Activated CD4-positive, alpha-beta memory T cell treated with anti-CD3 and anti-CD28 coated beads, Interleukin-2, amount 10 ng/mL, durations not matched to agents 7 days and 5 days (primary cell): ENCODE measurements at regions of chr9 and their contacts with region 1.

Region 1: DNA sequence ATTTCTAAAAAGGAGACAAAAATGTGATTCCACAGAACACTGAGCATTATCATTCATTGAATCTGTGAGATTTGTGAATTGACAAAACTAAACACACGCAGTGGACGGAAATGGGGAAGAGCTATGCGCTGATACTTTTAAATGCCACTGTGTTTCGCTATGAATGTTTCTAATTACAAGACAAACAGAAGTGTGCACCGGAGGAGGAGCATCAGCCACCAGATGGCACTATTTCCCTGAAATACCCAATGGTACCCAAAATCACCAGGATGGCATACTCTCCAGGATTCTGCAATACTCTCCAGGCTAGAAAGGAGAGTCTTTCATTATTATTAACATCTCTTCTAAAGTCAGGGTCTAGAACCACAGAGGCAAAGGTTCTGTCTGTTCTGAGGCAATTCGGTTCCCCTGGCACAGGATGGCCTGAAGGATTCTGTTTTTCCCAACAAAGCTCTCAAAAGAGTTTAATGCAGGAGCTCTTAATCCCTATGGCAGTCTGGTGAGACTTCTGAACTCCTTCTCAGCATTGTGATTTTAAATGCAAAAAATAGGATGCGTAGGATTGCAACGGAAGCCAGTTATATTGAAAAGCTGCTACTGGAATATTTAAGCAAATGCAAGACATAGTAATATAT is 13.8 kb upstream of the PUM3 start:
- DNase-seq: peak; percentile 73
- H3K4me3 Mint-ChIP-seq: no peak overlapping the region
- H3K27ac Mint-ChIP-seq: no peak overlapping the region
- H3K4me1 Mint-ChIP-seq: peaks cover 10% of the 10 kb centered on the region
- H3K27me3 Mint-ChIP-seq: peaks cover 36% of the 10 kb centered on the region

Region 2: DNA sequence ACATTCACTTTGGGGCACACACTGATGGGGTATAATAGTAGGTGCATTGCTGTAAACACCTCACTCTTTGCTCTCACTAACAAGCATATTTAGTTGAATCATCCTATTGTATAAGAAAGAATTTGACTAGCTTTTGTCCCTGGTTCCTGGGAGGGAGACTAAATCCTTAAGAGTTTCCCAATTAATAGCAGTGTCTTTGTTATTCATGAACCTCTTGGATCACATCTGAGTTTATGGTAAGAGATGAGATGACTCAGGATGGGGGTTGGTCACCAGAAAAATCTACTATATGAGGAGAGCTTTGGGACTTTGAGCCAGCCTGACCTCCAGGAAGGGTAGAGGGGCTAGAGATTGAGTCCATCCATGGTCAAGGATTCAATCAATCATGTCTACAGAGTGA is 70.6 kb before region 1 on chr9:
- CTCF ChIA-PET with region 1: no interaction called
- POLR2A ChIA-PET with region 1: no interaction called
- DNase-seq: no peak
- H3K4me3 Mint-ChIP-seq: no peak overlapping the region
- H3K27ac Mint-ChIP-seq: no peak overlapping the region
- H3K4me1 Mint-ChIP-seq: peaks cover 15% of the 10 kb centered on the region
- H3K27me3 Mint-ChIP-seq: no peaks in the 10 kb centered on the region

Region 3: DNA sequence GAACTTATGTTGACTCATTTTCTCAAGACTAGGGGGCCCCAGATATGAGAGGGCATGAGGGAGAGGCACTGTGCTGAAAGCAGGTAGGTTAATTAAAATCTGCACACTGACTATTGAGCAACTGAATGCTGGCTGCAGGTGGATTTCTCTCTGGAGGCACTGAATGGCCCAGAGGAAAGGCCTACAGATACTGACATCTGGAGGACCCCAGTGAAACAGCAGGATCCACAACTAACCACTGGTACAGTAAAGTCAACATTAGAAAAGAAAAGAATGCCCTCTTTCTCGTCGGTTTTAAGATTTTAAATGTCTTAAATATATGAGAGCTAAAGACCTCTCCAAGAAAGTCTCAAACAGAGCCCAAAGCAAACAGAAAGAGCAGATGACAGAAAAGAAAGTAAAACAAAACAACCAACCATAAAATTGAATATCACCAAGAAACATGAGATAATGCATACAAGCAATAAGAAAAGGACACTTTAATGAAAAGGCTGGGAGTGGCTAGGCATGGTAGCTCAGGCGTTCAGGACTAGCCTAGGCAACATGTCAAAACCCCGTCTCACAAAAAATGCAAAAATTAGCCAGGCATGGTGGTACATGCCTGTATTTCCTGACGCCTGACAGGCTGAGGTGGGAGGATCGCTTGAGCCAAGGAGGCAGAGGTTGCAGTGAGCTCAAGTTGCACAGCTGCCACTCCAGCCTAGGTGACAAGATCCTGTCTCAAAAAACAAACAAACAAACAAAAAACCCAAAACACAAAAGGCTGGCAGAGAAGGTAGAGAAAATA is 57.1 kb before region 1 on chr9:
- CTCF ChIA-PET with region 1: no interaction called
- POLR2A ChIA-PET with region 1: no interaction called
- DNase-seq: no peak
- H3K4me3 Mint-ChIP-seq: no peak overlapping the region
- H3K27ac Mint-ChIP-seq: no peak overlapping the region
- H3K4me1 Mint-ChIP-seq: peaks cover 4% of the 10 kb centered on the region
- H3K27me3 Mint-ChIP-seq: no peaks in the 10 kb centered on the region

Region 4: DNA sequence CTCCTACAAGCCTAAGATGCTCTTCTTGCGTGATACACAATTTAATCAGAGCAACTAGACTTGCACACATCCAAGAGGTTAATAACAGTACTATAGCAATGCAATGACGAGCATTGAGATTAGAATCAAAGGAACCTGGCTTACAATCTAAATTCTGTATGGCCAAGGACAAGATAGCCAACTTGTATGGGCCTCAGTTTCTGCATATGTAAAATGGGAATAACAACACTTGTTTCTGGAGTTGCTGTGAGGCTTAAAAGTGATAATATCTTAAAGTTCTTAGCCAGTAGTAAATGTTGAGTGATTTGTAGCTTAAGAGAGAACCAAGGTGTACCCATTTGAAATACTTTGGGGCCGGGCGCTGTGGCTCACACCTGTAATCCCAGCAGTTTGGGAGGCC is 11.6 kb before region 1 on chr9:
- CTCF ChIA-PET with region 1: interaction called, 36 read pairs
- POLR2A ChIA-PET with region 1: interaction called, 6 read pairs
- DNase-seq: no peak
- H3K4me3 Mint-ChIP-seq: no peak overlapping the region
- H3K27ac Mint-ChIP-seq: no peak overlapping the region
- H3K4me1 Mint-ChIP-seq: peaks cover 18% of the 10 kb centered on the region
- H3K27me3 Mint-ChIP-seq: no peaks in the 10 kb centered on the region

Region 5: DNA sequence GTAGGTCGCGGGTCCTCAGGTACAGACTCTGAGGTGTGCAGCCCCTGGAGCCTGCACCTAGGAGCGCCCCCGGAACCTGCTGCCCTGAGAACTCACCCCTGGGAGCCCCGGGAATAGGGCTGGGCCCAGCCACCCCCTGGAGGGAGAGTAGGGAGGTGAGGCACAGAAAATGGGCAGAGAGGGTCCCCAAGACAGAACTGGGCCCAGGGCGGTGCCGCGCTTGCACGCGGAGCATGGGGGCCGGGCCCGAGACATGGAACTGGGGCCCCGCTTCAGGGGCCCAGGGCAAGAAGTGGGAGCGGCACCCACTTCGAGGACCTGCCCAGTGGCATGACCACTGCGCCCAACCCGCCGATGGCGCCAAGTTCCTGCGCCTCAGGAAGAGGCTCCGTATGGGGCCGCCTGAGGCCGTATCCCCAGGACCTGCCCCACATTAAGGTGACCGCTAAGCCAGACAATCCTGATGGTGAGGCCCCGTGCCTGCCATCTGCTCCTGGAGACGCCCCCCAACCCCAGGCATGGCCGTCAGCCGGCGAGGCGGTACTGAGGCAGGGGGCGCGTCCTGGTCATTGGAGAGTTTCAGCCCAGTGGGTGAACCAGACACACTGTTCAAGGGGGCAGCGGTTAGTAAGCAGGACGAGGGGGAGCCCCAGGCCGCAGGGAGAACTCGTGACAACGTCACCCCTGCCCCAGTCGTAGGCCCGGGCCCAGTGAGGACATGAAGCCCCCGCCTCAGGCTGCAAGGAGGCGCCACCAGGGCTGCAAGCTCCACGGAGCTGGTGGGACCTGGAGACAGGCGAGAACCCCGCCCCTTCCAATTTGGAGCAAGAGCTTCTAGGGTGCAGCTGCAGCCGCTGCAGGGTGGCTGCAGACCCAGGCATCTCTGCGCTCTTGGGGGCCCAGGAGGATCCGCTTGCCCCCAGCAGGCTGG is 75.7 kb after region 1 on chr9:
- CTCF ChIA-PET with region 1: no interaction called
- POLR2A ChIA-PET with region 1: no interaction called
- DNase-seq: no peak
- H3K4me3 Mint-ChIP-seq: no peak overlapping the region
- H3K27ac Mint-ChIP-seq: no peak overlapping the region
- H3K4me1 Mint-ChIP-seq: no peaks in the 10 kb centered on the region
- H3K27me3 Mint-ChIP-seq: no peaks in the 10 kb centered on the region

Region 6: DNA sequence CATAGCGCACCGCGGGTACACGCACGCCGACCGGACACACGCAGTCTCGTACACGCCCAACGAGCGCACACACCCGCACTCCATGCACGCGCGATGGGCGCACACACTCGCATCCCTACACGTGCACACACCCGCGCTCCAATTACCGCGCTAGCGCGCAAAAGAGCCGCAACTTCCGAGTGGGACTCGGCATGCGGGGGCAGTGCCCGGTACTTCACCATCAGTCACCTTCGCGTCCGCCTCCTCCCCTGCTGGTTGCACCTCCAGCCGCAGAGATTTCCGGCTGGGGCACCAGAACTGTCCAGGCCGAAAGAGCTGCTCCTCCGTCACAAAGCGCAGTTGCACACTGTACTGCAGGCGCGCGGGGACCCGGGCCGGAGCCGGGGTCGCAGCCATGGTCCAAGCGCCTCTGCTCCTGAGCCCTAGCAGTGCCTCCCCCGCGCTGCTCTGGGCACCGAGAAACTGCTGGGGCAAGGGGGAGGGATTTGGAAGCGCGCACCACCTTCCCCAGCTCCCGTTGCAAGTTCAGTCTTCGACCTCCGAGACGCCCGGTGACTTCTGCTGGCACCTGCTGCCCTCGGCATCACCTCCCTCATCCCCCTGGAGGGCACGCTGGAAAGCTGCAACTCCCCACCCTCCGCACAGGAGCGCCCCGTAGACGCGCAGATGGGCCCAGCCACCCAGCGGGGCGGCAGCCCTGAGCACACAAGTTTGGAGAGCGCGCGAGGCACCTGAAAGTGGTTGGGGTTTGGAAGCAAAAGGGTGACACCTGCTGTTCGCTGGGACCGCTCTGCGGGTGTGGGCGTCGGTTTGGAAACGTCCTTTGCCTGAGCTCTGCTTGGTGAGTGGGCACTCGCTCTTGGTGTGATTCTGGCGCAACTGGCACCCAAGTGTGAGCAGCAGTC is 323.6 kb after region 1 on chr9:
- CTCF ChIA-PET with region 1: interaction called, 19 read pairs
- POLR2A ChIA-PET with region 1: no interaction called
- DNase-seq: peak; percentile 44
- H3K4me3 Mint-ChIP-seq: peak overlapping the region; percentile 22
- H3K27ac Mint-ChIP-seq: no peak overlapping the region
- H3K4me1 Mint-ChIP-seq: peaks cover 3% of the 10 kb centered on the region
- H3K27me3 Mint-ChIP-seq: peaks cover 45% of the 10 kb centered on the region

Region 7: GRCh38 chr9:3441197-3441816 is 583.6 kb after region 1 on chr9:
- CTCF ChIA-PET with region 1: interaction called, 16 read pairs
- POLR2A ChIA-PET with region 1: no interaction called
- DNase-seq: peak; percentile 52
- H3K4me3 Mint-ChIP-seq: no peak overlapping the region
- H3K27ac Mint-ChIP-seq: no peak overlapping the region
- H3K4me1 Mint-ChIP-seq: no peaks in the 10 kb centered on the region
- H3K27me3 Mint-ChIP-seq: no peaks in the 10 kb centered on the region